Colonic mucosa (tissue), 4 donors: ENCODE measurements at regions of chr13 and their contacts with region 1.

Region 1: DNA sequence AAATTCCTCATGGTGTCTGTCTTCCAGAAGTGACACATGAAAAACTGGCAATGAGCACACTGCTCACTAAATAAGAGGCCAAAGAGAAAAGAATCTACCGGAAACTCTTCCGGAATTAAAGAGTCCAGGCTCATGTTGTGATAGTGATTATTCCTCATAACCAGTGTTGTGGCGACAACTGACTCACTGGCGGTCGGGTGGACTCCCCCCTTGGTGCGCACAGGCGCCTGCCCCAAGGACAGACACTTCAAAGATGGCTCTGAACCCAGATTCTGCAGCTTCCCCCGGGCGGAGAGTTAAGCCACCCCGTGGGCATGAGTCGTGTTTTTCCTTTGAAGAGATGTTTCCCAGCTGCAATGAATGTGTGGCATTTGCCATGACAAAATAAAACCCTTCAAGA is 10.3 kb downstream of the IL17D start:
- DNase-seq: no peak
- H3K4me3 ChIP-seq: no peak overlapping the region
- H3K27ac ChIP-seq: no peak overlapping the region
- H3K4me1 ChIP-seq: no peaks in the 10 kb centered on the region
- H3K27me3 ChIP-seq: no peaks in the 10 kb centered on the region
- CTCF ChIP-seq: no peak

Region 2: GRCh38 chr13:20633802-20634201 is 79.9 kb before region 1 on chr13:
- intact Hi-C with region 1: no loop called
- DNase-seq: no peak
- H3K4me3 ChIP-seq: no peak overlapping the region
- H3K27ac ChIP-seq: no peak overlapping the region
- H3K4me1 ChIP-seq: no peaks in the 10 kb centered on the region
- H3K27me3 ChIP-seq: no peaks in the 10 kb centered on the region
- CTCF ChIP-seq: no peak

Region 3: GRCh38 chr13:20828539-20829364 is 115.0 kb after region 1 on chr13:
- intact Hi-C with region 1: loop called (anchors 5 kb)
- DNase-seq: peak; percentile 47
- H3K4me3 ChIP-seq: no peak overlapping the region
- H3K27ac ChIP-seq: no peak overlapping the region
- H3K4me1 ChIP-seq: no peaks in the 10 kb centered on the region
- H3K27me3 ChIP-seq: no peaks in the 10 kb centered on the region
- CTCF ChIP-seq: peak; percentile 81

Region 4: GRCh38 chr13:21383090-21383489 is 669.3 kb after region 1 on chr13:
- intact Hi-C with region 1: no loop called
- DNase-seq: no peak
- H3K4me3 ChIP-seq: no peak overlapping the region
- H3K27ac ChIP-seq: no peak overlapping the region
- H3K4me1 ChIP-seq: no peaks in the 10 kb centered on the region
- H3K27me3 ChIP-seq: no peaks in the 10 kb centered on the region
- CTCF ChIP-seq: no peak